MCF 10A (cell line): ENCODE measurements at regions of chr2 and their contacts with region 1.

Region 1: GRCh38 chr2:176554101-176555048 is 285.1 kb downstream of the MTX2 start:
- DNase-seq: peak; percentile 63
- H3K4me3 Mint-ChIP-seq: peak overlapping the region; percentile 58
- H3K27ac Mint-ChIP-seq: no peak overlapping the region
- H3K4me1 Mint-ChIP-seq: peaks cover 28% of the 10 kb centered on the region
- H3K27me3 Mint-ChIP-seq: no peaks in the 10 kb centered on the region
- CTCF ChIP-seq: peak; percentile 83

Region 2: GRCh38 chr2:176140513-176141317 is 413.7 kb before region 1 on chr2:
- CTCF ChIA-PET with region 1: interaction called, 175 read pairs
- POLR2A ChIA-PET with region 1: interaction called, 20 read pairs
- intact Hi-C with region 1: loop called (anchors 1 kb)
- DNase-seq: peak; percentile 73
- H3K4me3 Mint-ChIP-seq: peak overlapping the region; percentile 57
- H3K27ac Mint-ChIP-seq: no peak overlapping the region
- H3K4me1 Mint-ChIP-seq: no peaks in the 10 kb centered on the region
- H3K27me3 Mint-ChIP-seq: no peaks in the 10 kb centered on the region
- CTCF ChIP-seq: peak; percentile 96

Region 3: GRCh38 chr2:176269319-176270099 is 284.9 kb before region 1 on chr2 and contains the start of gene MTX2:
- CTCF ChIA-PET with region 1: interaction called, 6 read pairs
- POLR2A ChIA-PET with region 1: interaction called, 7 read pairs
- intact Hi-C with region 1: loop called (anchors 5 kb)
- DNase-seq: peak; percentile 79
- H3K4me3 Mint-ChIP-seq: peak within 1 kb of the TSS; percentile 99
- H3K27ac Mint-ChIP-seq: peak within 1 kb of the TSS; percentile 99
- H3K4me1 Mint-ChIP-seq: peaks cover 16% of the 10 kb centered on the region
- H3K27me3 Mint-ChIP-seq: no peaks in the 10 kb centered on the region
- CTCF ChIP-seq: peak; percentile 11
- total RNA-seq, gene MTX2: 38.0 and 40.9 TPM in 2 replicates

Region 4: DNA sequence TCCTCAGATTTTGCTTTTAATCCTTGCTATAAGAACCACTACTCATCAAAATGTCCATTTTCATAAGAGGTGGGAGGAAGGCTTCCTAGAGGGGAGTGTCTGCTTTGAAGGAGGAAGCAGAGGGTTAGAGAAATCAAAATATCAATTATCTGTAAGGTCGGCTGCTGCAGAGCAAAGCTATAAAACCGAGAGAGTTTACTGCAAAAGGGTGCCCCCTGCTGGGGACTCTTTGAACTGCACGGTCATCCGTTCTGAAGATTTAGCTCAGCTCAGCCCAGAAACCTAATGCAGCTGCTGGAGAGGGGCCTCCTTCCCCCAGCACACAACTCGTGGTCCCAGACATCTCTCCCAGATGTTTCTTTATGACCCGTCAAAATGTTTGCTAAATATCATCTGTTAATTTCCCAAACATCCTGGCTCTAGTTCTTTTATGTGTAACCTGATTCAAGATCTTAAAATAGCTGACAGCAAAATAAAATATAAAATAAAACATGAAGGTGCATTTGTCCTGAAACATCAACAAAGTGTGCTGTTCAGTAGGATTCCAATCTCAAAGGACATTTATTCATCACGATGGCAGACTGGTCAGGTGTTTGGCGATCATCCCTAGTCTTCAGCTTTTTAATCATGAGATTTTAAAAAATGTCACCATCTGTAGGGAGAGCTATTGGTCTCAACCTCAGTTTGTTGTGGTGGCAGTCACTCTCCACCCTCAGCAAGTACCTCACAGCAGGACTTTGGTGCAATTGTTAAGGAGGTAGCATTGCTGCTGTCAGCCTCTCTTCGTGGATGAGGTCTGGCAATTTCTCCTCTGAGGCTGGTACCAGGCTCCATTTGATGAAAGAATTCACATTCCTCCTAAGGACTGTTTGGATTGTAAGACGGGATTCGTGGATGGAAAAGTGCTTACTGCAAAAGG is 99.2 kb before region 1 on chr2:
- CTCF ChIA-PET with region 1: interaction called, 72 read pairs
- POLR2A ChIA-PET with region 1: interaction called, 14 read pairs
- intact Hi-C with region 1: loop called (anchors 1 kb)
- DNase-seq: peak; percentile 68
- H3K4me3 Mint-ChIP-seq: no peak overlapping the region
- H3K27ac Mint-ChIP-seq: no peak overlapping the region
- H3K4me1 Mint-ChIP-seq: peaks cover 6% of the 10 kb centered on the region
- H3K27me3 Mint-ChIP-seq: no peaks in the 10 kb centered on the region
- CTCF ChIP-seq: peak; percentile 81

Region 5: GRCh38 chr2:176534798-176535466 is 19.4 kb before region 1 on chr2:
- CTCF ChIA-PET with region 1: interaction called, 8 read pairs
- POLR2A ChIA-PET with region 1: interaction called, 50 read pairs
- intact Hi-C with region 1: no loop called
- DNase-seq: peak; percentile 34
- H3K4me3 Mint-ChIP-seq: no peak overlapping the region
- H3K27ac Mint-ChIP-seq: no peak overlapping the region
- H3K4me1 Mint-ChIP-seq: peaks cover 37% of the 10 kb centered on the region
- H3K27me3 Mint-ChIP-seq: no peaks in the 10 kb centered on the region
- CTCF ChIP-seq: no peak

Region 6: DNA sequence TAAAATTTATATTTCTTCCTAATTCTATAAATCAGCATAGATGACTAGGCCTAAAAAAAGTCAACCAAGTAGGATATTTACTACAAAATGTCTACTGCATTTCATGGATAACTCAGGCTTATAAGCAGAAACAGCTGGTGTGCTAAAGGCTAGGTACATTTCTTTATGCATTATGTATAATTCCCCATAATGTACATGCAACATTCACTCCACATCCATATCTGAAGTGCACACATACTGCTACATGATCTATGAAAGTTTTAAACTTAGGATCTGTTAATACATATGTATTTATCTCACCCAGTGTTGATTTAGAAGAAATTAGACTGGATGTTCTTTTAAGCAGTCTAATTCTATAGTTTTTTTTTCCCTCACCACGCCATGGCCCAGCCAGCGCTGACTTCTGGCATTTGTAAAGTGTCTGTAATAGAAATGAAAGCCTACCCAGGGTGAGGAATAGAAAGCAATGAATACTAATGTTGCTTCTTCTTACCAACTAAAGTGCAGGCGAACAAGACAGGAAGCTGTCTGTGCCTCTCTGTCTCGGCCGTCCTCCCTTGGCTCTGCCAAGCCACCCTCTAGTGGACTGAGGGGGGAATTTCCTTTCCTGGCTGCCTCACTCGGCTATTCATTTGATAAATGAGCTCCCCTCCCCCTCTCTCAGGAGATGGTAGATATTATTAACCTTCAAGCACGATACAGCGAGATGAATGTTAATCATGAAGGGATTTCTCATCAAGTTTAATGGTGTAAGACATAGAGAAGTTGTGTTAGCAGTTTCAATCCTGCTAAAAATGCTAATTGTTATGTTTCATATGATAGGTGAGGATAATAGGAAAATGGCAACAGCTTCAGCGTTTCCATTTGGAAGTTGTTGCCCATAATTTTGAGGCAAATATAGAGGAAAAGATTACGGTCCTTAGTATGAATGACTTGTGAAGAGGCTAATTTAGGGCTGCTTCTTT is 99.4 kb after region 1 on chr2:
- CTCF ChIA-PET with region 1: interaction called, 18 read pairs
- POLR2A ChIA-PET with region 1: interaction called, 5 read pairs
- intact Hi-C with region 1: no loop called
- DNase-seq: peak; percentile 81
- H3K4me3 Mint-ChIP-seq: no peak overlapping the region
- H3K27ac Mint-ChIP-seq: no peak overlapping the region
- H3K4me1 Mint-ChIP-seq: peaks cover 5% of the 10 kb centered on the region
- H3K27me3 Mint-ChIP-seq: peaks cover 29% of the 10 kb centered on the region
- CTCF ChIP-seq: peak; percentile 73